PC-9 (cell line): ENCODE measurements at regions of chr12 and their contacts with region 1.

Region 1: DNA sequence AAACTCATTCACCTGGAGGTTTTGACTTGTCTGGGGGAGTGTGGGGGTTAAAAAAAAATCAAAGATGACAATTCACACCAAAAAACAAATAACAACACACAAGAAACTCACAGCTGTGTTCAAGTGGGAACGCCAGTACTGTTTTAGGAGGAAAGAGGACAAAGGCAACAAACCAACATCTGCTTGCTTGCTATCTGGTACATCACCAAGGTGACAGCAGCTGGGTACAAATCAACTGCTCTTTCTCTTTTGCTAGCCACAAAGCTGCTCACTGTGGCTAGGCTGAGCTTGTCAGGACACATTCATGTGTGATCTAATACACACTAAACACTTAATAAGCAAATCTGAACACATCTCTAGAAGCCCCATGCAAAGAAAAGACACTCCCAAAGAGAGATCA is 128.0 kb upstream of the RAP1B start:
- DNase-seq: no peak
- H3K4me3 ChIP-seq: no peak overlapping the region
- H3K27ac ChIP-seq: no peak overlapping the region
- H3K4me1 ChIP-seq: peaks cover 6% of the 10 kb centered on the region
- H3K27me3 ChIP-seq: no peaks in the 10 kb centered on the region
- CTCF ChIP-seq: no peak

Region 2: GRCh38 chr12:68468036-68468435 is 14.6 kb before region 1 on chr12:
- CTCF ChIA-PET with region 1: no interaction called
- POLR2A ChIA-PET with region 1: interaction called, 14 read pairs
- intact Hi-C with region 1: no loop called
- DNase-seq: no peak
- H3K4me3 ChIP-seq: no peak overlapping the region
- H3K27ac ChIP-seq: no peak overlapping the region
- H3K4me1 ChIP-seq: no peaks in the 10 kb centered on the region
- H3K27me3 ChIP-seq: no peaks in the 10 kb centered on the region
- CTCF ChIP-seq: no peak

Region 3: GRCh38 chr12:69039894-69040293 is 557.2 kb after region 1 on chr12:
- CTCF ChIA-PET with region 1: no interaction called
- POLR2A ChIA-PET with region 1: no interaction called
- intact Hi-C with region 1: no loop called
- DNase-seq: no peak
- H3K4me3 ChIP-seq: no peak overlapping the region
- H3K27ac ChIP-seq: no peak overlapping the region
- H3K4me1 ChIP-seq: no peaks in the 10 kb centered on the region
- H3K27me3 ChIP-seq: no peaks in the 10 kb centered on the region
- CTCF ChIP-seq: no peak